ENCODE measurements at regions of chr15 and their contacts with region 1.

Region 1: GRCh38 chr15:25693321-25694237 is 169.5 kb downstream of the ATP10A start:
- ATAC-seq: peak in 6 of 8 experiments; percentile 24 to 82 (median 58)
- H3K4me3 ChIP-seq: no peak overlapping the region
- H3K27ac ChIP-seq: no peak overlapping the region
- H3K4me1 ChIP-seq: peaks cover 0 to 6% of the 10 kb centered on the region in 2 donors

Region 2: GRCh38 chr15:25543196-25543595 is 150.4 kb before region 1 on chr15:
- in situ Hi-C with region 1: loop called in 1 of 9 experiments (anchors 25 kb)
- ATAC-seq: peak in 4 of 8 experiments; percentile 44 to 63 (median 53)
- H3K4me3 ChIP-seq: no peak overlapping the region
- H3K27ac ChIP-seq: no peak overlapping the region
- H3K4me1 ChIP-seq: peaks cover 0 to 3% of the 10 kb centered on the region in 2 donors

Measured in motor neuron (in vitro differentiated cells).